ENCODE measurements at regions of chr2 and their contacts with region 1.

Region 1: GRCh38 chr2:138827426-138828054 is 47.4 kb upstream of the NXPH2 start:
- DNase-seq: no peak
- ATAC-seq: peak in 6 of 8 donors; percentile 46 to 70 (median 62)
- H3K4me3 ChIP-seq: no peak overlapping the region
- H3K27ac ChIP-seq: no peak overlapping the region
- H3K4me1 ChIP-seq: no peaks in the 10 kb centered on the region
- H3K27me3 ChIP-seq: peaks cover 0 to 5% (median 0%) of the 10 kb centered on the region in 7 donors
- CTCF ChIP-seq: peak; percentile 48 to 83 (median 75)

Region 2: DNA sequence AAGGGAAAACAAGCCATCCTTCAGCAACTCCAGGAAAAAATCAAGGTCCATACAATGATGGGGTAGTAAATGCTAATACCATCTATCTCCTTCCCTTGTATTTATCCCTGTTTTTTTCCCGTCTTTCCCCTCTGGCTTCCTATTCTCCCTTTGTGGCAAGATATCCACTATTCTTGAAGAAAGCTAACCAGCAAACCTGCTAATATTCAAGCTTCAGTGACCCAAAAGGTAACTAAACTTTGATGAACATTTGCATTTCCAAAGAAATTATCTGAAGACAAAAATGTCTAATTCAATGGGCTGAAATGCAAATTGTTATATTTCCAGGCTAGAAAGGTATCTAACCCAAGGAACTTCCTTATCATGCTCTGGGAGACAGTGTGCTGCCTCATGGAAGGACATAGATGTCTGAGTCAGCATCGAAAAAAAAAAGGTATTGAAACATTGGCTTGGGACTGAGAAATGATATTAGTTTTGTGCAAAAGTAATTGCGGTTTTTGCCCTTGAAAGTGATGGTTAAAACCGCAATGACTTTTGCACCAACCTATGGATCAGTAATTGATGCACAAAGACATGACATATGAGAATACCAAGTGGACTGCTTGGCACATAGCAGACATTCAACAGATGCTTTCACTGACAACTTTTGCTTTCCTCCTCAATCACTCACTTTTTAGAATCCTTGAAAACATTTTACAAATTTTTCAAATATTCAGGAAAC is 927.0 kb before region 1 on chr2:
- intact Hi-C with region 1: loop called in 2 of 10 experiments (anchors 5 to 10 kb)
- DNase-seq: no peak
- ATAC-seq: no peak
- H3K4me3 ChIP-seq: no peak overlapping the region
- H3K27ac ChIP-seq: no peak overlapping the region
- H3K4me1 ChIP-seq: no peaks in the 10 kb centered on the region
- H3K27me3 ChIP-seq: peaks cover 0 to 6% (median 0%) of the 10 kb centered on the region in 7 donors
- CTCF ChIP-seq: no peak

Region 3: GRCh38 chr2:137910641-137911040 is 916.9 kb before region 1 on chr2:
- intact Hi-C with region 1: loop called (anchors 2 to 10 kb)
- DNase-seq: no peak
- ATAC-seq: no peak
- H3K4me3 ChIP-seq: no peak overlapping the region
- H3K27ac ChIP-seq: no peak overlapping the region
- H3K4me1 ChIP-seq: no peaks in the 10 kb centered on the region
- H3K27me3 ChIP-seq: peaks cover 0 to 4% (median 0%) of the 10 kb centered on the region in 7 donors
- CTCF ChIP-seq: peak; percentile 44 to 80 (median 67)

Region 4: GRCh38 chr2:138948070-138948539 is 120.6 kb after region 1 on chr2:
- intact Hi-C with region 1: no loop called
- DNase-seq: peak in 1 of 2 donors; percentile 26
- ATAC-seq: peak in 6 of 8 donors; percentile 28 to 88 (median 68)
- H3K4me3 ChIP-seq: no peak overlapping the region
- H3K27ac ChIP-seq: no peak overlapping the region
- H3K4me1 ChIP-seq: no peaks in the 10 kb centered on the region
- H3K27me3 ChIP-seq: no peaks in the 10 kb centered on the region
- CTCF ChIP-seq: no peak